Transverse colon (tissue), 4 donors: ENCODE measurements at regions of chr14 and their contacts with region 1.

Region 1: GRCh38 chr14:28482251-28483040 is 284.1 kb upstream of the FOXG1 start:
- DNase-seq: no peak
- H3K4me3 ChIP-seq: no peak overlapping the region
- H3K27ac ChIP-seq: no peak overlapping the region
- H3K4me1 ChIP-seq: no peaks in the 10 kb centered on the region
- H3K27me3 ChIP-seq: no peaks in the 10 kb centered on the region
- CTCF ChIP-seq: no peak
- EP300 ChIP-seq: no peak
- POLR2A ChIP-seq: no peak

Region 2: GRCh38 chr14:28542040-28542439 is 59.6 kb after region 1 on chr14:
- in situ Hi-C with region 1: no loop called
- intact Hi-C with region 1: no loop called
- DNase-seq: no peak
- H3K4me3 ChIP-seq: no peak overlapping the region
- H3K27ac ChIP-seq: no peak overlapping the region
- H3K4me1 ChIP-seq: no peaks in the 10 kb centered on the region
- H3K27me3 ChIP-seq: no peaks in the 10 kb centered on the region
- CTCF ChIP-seq: no peak
- EP300 ChIP-seq: no peak
- POLR2A ChIP-seq: no peak

Region 3: DNA sequence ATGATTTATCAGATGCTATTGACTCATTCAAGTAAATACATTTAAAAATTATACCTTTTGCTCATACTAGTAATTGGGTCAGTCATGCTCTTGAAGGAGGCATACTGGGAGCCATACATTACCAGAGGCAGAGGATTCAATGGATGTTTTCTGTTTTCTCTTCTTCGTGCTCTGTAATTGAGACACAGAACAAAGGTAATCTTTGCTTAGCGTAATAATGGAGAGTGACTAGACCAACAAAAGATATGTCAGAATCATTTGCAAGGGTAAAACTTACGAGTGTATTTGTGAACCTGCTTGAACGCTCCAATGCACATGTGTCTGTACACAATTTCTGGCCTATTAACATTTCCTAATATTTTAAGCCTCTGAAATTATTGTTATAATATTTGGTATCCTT is 580.5 kb after region 1 on chr14:
- in situ Hi-C with region 1: no loop called
- intact Hi-C with region 1: no loop called
- DNase-seq: no peak
- H3K4me3 ChIP-seq: no peak overlapping the region
- H3K27ac ChIP-seq: no peak overlapping the region
- H3K4me1 ChIP-seq: no peaks in the 10 kb centered on the region
- H3K27me3 ChIP-seq: no peaks in the 10 kb centered on the region
- CTCF ChIP-seq: no peak
- EP300 ChIP-seq: no peak
- POLR2A ChIP-seq: no peak

Region 4: DNA sequence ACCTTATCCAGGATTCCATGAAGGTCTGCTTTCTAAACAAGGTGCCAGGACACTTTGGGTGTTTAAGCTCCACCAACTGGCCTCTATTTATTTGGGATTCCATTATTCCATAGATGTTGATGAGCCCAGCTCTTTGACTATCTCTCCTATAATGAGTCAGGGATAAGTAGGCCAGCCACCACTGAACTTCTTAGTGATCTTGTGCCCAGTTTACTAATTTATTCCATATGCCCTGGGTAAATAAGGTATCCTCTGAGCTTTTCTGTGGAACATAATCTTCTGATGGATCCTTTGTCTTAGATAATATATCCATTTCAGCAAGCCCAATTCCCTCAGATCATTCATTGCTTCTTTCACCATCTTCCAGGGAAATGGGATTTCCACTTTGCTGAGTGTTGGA is 819.1 kb after region 1 on chr14:
- in situ Hi-C with region 1: no loop called
- intact Hi-C with region 1: loop called (anchors 10 kb)
- DNase-seq: no peak
- H3K4me3 ChIP-seq: no peak overlapping the region
- H3K27ac ChIP-seq: no peak overlapping the region
- H3K4me1 ChIP-seq: no peaks in the 10 kb centered on the region
- H3K27me3 ChIP-seq: no peaks in the 10 kb centered on the region
- CTCF ChIP-seq: no peak
- EP300 ChIP-seq: no peak
- POLR2A ChIP-seq: no peak